CD4-positive, alpha-beta T cell (primary cell): ENCODE measurements at regions of chr1 and their contacts with region 1.

Region 1: GRCh38 chr1:116881879-116882520 is 27.7 kb upstream of the PTGFRN start:
- DNase-seq: peak in 6 of 14 experiments; percentile 9 to 55 (median 31)
- ATAC-seq: no peak
- H3K4me3 ChIP-seq: no peak overlapping the region
- H3K4me3 Mint-ChIP-seq: no peak overlapping the region
- H3K27ac ChIP-seq: no peak overlapping the region
- H3K27ac Mint-ChIP-seq: no peak overlapping the region
- H3K4me1 ChIP-seq: peaks cover 23% of the 10 kb centered on the region
- H3K4me1 Mint-ChIP-seq: peaks cover 3% of the 10 kb centered on the region
- H3K27me3 ChIP-seq: no peaks in the 10 kb centered on the region
- H3K27me3 Mint-ChIP-seq: no peaks in the 10 kb centered on the region
- CTCF ChIP-seq: peak; percentile 31

Region 2: GRCh38 chr1:115337633-115338456 is 1544.2 kb before region 1 on chr1 and contains the start of gene NGF:
- CTCF ChIA-PET with region 1: no interaction called
- POLR2A ChIA-PET with region 1: no interaction called
- intact Hi-C with region 1: no loop called
- DNase-seq: no peak
- ATAC-seq: no peak
- H3K4me3 ChIP-seq: no peak within 1 kb of the TSS
- H3K4me3 Mint-ChIP-seq: no peak within 1 kb of the TSS
- H3K27ac ChIP-seq: no peak within 1 kb of the TSS
- H3K27ac Mint-ChIP-seq: no peak within 1 kb of the TSS
- H3K4me1 ChIP-seq: no peaks in the 10 kb centered on the region
- H3K4me1 Mint-ChIP-seq: no peaks in the 10 kb centered on the region
- H3K27me3 ChIP-seq: peaks cover 26 to 27% of the 10 kb centered on the region in 2 experiments
- H3K27me3 Mint-ChIP-seq: peaks cover 51% of the 10 kb centered on the region
- CTCF ChIP-seq: no peak
- total RNA-seq, gene NGF: not detected

Region 3: GRCh38 chr1:116754198-116754977 is 127.6 kb before region 1 on chr1 and contains the start of gene CD2:
- CTCF ChIA-PET with region 1: no interaction called
- POLR2A ChIA-PET with region 1: interaction called, 10 read pairs
- intact Hi-C with region 1: no loop called
- DNase-seq: peak in 11 of 14 experiments; percentile 47 to 82 (median 60)
- ATAC-seq: peak; percentile 86
- H3K4me3 ChIP-seq: peak within 1 kb of the TSS; percentile 78
- H3K4me3 Mint-ChIP-seq: peak within 1 kb of the TSS; percentile 97
- H3K27ac ChIP-seq: peak within 1 kb of the TSS; percentile 81 to 82
- H3K27ac Mint-ChIP-seq: peak within 1 kb of the TSS; percentile 99
- H3K4me1 ChIP-seq: peaks cover 19% of the 10 kb centered on the region
- H3K4me1 Mint-ChIP-seq: peaks cover 59% of the 10 kb centered on the region
- H3K27me3 ChIP-seq: no peaks in the 10 kb centered on the region
- H3K27me3 Mint-ChIP-seq: no peaks in the 10 kb centered on the region
- CTCF ChIP-seq: peak; percentile 13
- total RNA-seq, gene CD2: 150 to 151 TPM

Region 4: GRCh38 chr1:116919802-116920201 is 37.8 kb after region 1 on chr1:
- CTCF ChIA-PET with region 1: no interaction called
- POLR2A ChIA-PET with region 1: no interaction called
- intact Hi-C with region 1: loop called in 1 of 2 experiments (anchors 1 kb)
- DNase-seq: no peak
- ATAC-seq: no peak
- H3K4me3 ChIP-seq: no peak overlapping the region
- H3K4me3 Mint-ChIP-seq: no peak overlapping the region
- H3K27ac ChIP-seq: no peak overlapping the region
- H3K27ac Mint-ChIP-seq: no peak overlapping the region
- H3K4me1 ChIP-seq: peaks cover 5% of the 10 kb centered on the region
- H3K4me1 Mint-ChIP-seq: peaks cover 4% of the 10 kb centered on the region
- H3K27me3 ChIP-seq: no peaks in the 10 kb centered on the region
- H3K27me3 Mint-ChIP-seq: no peaks in the 10 kb centered on the region
- CTCF ChIP-seq: no peak

Region 5: DNA sequence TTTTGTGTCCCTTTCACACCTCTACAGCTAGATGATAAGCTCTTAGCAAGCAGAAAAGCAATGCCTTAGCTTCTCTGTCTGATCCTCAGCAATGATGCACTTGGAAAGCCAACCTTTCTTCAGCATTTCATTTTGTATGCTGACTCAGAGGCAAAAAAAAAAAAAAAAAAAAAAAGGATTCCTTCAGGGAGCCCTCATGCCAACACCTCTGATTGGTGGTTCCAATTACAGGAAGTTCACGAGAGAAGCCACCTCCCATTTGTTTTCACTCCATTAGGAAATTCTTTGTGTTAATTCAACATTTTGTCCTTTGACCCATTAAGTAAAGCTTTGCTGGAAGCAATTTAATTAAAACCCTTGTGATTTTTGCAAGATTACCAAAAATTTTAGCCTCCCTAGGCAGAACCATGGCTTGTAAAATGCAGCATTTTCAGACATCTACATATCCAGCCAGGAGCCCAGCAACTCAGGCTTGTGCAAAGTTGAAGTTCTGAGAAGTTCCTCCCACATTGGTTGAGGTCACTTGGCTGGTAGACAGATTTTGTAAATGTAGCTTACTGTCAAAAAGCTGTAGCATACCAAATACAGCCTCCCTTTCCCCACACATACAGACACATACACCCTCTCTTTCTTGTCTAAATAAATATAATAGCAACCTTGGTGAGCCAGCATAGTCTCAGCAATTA is 355.8 kb after region 1 on chr1:
- CTCF ChIA-PET with region 1: no interaction called
- POLR2A ChIA-PET with region 1: no interaction called
- intact Hi-C with region 1: no loop called
- DNase-seq: no peak
- ATAC-seq: no peak
- H3K4me3 ChIP-seq: no peak overlapping the region
- H3K4me3 Mint-ChIP-seq: no peak overlapping the region
- H3K27ac ChIP-seq: no peak overlapping the region
- H3K27ac Mint-ChIP-seq: no peak overlapping the region
- H3K4me1 ChIP-seq: no peaks in the 10 kb centered on the region
- H3K4me1 Mint-ChIP-seq: no peaks in the 10 kb centered on the region
- H3K27me3 ChIP-seq: peaks cover 0 to 4% of the 10 kb centered on the region in 2 experiments
- H3K27me3 Mint-ChIP-seq: peaks cover 33% of the 10 kb centered on the region
- CTCF ChIP-seq: no peak